ENCODE measurements at regions of chr3 and their contacts with region 1.

Region 1: GRCh38 chr3:12891985-12892839 is 50.8 kb upstream of the RPL32 start:
- DNase-seq: peak; percentile 75
- ATAC-seq: peak; percentile 37
- H3K4me3 ChIP-seq: peak overlapping the region in 1 of 5 experiments; percentile 35
- H3K4me3 Mint-ChIP-seq: peak overlapping the region; percentile 2
- H3K27ac ChIP-seq: no peak overlapping the region
- H3K27ac Mint-ChIP-seq: no peak overlapping the region
- H3K4me1 ChIP-seq: peaks cover 4 to 8% of the 10 kb centered on the region in 2 donors
- H3K4me1 Mint-ChIP-seq: peaks cover 14% of the 10 kb centered on the region
- H3K27me3 ChIP-seq: peaks cover 0 to 14% (median 3%) of the 10 kb centered on the region in 4 experiments
- H3K27me3 Mint-ChIP-seq: peaks cover 9% of the 10 kb centered on the region
- CTCF ChIP-seq: peak; percentile 94

Region 2: DNA sequence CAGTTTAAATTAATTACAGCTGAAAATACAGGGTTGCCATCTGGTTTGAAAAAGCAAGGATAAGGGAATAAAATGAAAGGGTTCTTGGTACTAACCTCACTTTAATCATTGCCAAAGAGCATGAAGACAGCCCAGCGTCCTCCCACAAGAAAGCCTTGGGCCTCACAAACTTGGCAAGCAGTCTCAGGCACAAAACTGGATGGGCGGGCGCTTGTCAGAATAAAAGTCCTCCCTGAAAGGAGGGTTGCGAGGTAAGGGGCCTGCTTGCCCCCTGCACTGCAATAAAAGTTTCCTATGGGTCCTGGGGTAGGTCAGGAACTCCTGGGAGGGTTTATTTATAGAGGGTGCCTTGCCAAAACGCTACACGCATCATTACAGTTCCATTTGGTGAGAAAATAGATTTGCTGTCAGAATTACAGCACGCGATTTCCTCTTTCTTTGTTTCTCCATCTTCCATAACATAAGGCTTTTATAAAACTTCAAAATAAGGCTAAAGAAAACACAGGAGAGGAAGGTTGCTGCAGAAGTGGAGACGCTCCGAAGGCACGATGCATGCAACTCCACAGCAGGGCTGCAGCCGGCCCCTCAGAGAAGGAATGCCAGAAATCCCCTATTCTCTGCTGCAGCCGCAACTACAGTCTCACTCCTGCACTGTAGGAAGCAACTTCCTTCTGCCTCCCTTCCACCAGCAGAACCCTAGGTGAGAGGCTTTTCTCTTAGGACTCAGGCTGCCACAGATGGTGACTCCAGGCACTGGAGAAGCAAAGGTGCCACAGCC is 1309.8 kb before region 1 on chr3:
- CTCF ChIA-PET with region 1: no interaction called
- POLR2A ChIA-PET with region 1: no interaction called
- intact Hi-C with region 1: no loop called
- DNase-seq: no peak
- ATAC-seq: no peak
- H3K4me3 ChIP-seq: no peak overlapping the region
- H3K4me3 Mint-ChIP-seq: peak overlapping the region; percentile 29
- H3K27ac ChIP-seq: no peak overlapping the region
- H3K27ac Mint-ChIP-seq: no peak overlapping the region
- H3K4me1 ChIP-seq: peaks cover 13 to 16% of the 10 kb centered on the region in 2 donors
- H3K4me1 Mint-ChIP-seq: peaks cover 35% of the 10 kb centered on the region
- H3K27me3 ChIP-seq: no peaks in the 10 kb centered on the region
- H3K27me3 Mint-ChIP-seq: no peaks in the 10 kb centered on the region
- CTCF ChIP-seq: no peak

Region 3: DNA sequence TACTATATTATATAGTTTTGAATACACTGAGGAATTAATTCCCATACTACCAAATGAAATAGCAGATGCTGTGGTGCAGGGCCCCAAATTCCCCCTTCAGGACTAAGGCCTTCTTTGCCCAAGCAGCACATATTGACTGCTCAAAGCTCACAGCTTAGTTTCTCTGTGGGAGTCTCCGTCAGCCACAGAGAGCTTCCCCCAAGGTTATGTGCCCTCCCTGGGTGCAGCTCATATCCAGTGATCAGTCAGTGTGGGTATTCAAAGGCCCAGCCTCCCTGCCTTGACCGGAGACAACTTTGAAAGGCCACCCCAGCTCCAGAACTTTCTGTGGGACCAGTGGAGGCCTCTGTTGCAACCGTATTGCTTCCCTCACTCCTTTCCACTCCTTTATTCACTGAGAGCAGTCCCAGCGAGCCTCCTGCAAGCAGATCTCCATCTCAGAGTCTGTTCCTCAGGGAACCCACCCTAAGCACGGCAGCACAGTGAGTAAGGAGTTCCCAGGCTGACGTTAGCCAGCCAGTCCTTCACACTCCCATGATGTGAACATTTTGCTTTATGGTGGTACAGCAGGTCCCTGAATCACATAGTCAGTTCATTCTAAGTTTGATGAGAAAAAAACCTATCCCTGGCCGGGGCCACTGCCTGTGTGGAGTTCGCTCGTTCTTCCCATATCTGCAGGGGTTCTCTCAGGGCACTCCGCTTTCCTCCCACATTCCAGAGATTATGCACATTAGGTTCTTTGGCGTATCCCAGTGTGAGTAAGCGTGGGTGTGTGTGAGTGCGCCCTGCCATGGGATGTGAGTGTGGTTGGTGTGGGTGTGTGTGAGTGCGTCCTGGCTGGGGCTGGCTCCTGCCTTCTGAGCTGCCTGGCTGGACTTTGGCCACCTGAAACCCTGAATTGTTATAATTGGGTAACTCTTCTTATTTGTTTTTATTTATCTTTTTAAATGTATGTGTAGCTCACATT is 667.7 kb before region 1 on chr3:
- CTCF ChIA-PET with region 1: no interaction called
- POLR2A ChIA-PET with region 1: no interaction called
- intact Hi-C with region 1: no loop called
- DNase-seq: no peak
- ATAC-seq: no peak
- H3K4me3 ChIP-seq: no peak overlapping the region
- H3K4me3 Mint-ChIP-seq: no peak overlapping the region
- H3K27ac ChIP-seq: no peak overlapping the region
- H3K27ac Mint-ChIP-seq: no peak overlapping the region
- H3K4me1 ChIP-seq: no peaks in the 10 kb centered on the region
- H3K4me1 Mint-ChIP-seq: no peaks in the 10 kb centered on the region
- H3K27me3 ChIP-seq: no peaks in the 10 kb centered on the region
- H3K27me3 Mint-ChIP-seq: no peaks in the 10 kb centered on the region
- CTCF ChIP-seq: no peak

Region 4: GRCh38 chr3:12706504-12707253 is 185.5 kb before region 1 on chr3:
- CTCF ChIA-PET with region 1: interaction called, 13 read pairs
- POLR2A ChIA-PET with region 1: no interaction called
- intact Hi-C with region 1: loop called (anchors 1 kb)
- DNase-seq: peak; percentile 67
- ATAC-seq: peak; percentile 97
- H3K4me3 ChIP-seq: no peak overlapping the region
- H3K4me3 Mint-ChIP-seq: no peak overlapping the region
- H3K27ac ChIP-seq: no peak overlapping the region
- H3K27ac Mint-ChIP-seq: no peak overlapping the region
- H3K4me1 ChIP-seq: no peaks in the 10 kb centered on the region
- H3K4me1 Mint-ChIP-seq: peaks cover 1% of the 10 kb centered on the region
- H3K27me3 ChIP-seq: peaks cover 0 to 7% (median 0%) of the 10 kb centered on the region in 4 experiments
- H3K27me3 Mint-ChIP-seq: peaks cover 8% of the 10 kb centered on the region
- CTCF ChIP-seq: peak; percentile 77

Region 5: GRCh38 chr3:12868039-12869034 is 23.9 kb before region 1 on chr3:
- CTCF ChIA-PET with region 1: interaction called, 116 read pairs
- POLR2A ChIA-PET with region 1: no interaction called
- intact Hi-C with region 1: loop called (anchors 1 kb)
- DNase-seq: peak; percentile 79
- ATAC-seq: peak; percentile 73
- H3K4me3 ChIP-seq: peak overlapping the region; percentile 19 to 59 (median 47)
- H3K4me3 Mint-ChIP-seq: peak overlapping the region; percentile 85
- H3K27ac ChIP-seq: no peak overlapping the region
- H3K27ac Mint-ChIP-seq: peak overlapping the region; percentile 8
- H3K4me1 ChIP-seq: peaks cover 16 to 34% of the 10 kb centered on the region in 2 donors
- H3K4me1 Mint-ChIP-seq: peaks cover 23% of the 10 kb centered on the region
- H3K27me3 ChIP-seq: peaks cover 0 to 23% (median 3%) of the 10 kb centered on the region in 4 experiments
- H3K27me3 Mint-ChIP-seq: peaks cover 9% of the 10 kb centered on the region
- CTCF ChIP-seq: peak; percentile 92

Region 6: GRCh38 chr3:12875857-12876836 is 16.1 kb before region 1 on chr3:
- CTCF ChIA-PET with region 1: interaction called, 116 read pairs
- POLR2A ChIA-PET with region 1: interaction called, 3 read pairs
- intact Hi-C with region 1: no loop called
- DNase-seq: peak; percentile 55
- ATAC-seq: peak; percentile 81
- H3K4me3 ChIP-seq: peak overlapping the region in 2 of 5 experiments; percentile 12 to 27
- H3K4me3 Mint-ChIP-seq: peak overlapping the region; percentile 39
- H3K27ac ChIP-seq: no peak overlapping the region
- H3K27ac Mint-ChIP-seq: peak overlapping the region; percentile 20
- H3K4me1 ChIP-seq: peaks cover 8 to 14% of the 10 kb centered on the region in 2 donors
- H3K4me1 Mint-ChIP-seq: peaks cover 9% of the 10 kb centered on the region
- H3K27me3 ChIP-seq: peaks cover 0 to 24% (median 4%) of the 10 kb centered on the region in 4 experiments
- H3K27me3 Mint-ChIP-seq: peaks cover 7% of the 10 kb centered on the region
- CTCF ChIP-seq: peak; percentile 9

Region 7: DNA sequence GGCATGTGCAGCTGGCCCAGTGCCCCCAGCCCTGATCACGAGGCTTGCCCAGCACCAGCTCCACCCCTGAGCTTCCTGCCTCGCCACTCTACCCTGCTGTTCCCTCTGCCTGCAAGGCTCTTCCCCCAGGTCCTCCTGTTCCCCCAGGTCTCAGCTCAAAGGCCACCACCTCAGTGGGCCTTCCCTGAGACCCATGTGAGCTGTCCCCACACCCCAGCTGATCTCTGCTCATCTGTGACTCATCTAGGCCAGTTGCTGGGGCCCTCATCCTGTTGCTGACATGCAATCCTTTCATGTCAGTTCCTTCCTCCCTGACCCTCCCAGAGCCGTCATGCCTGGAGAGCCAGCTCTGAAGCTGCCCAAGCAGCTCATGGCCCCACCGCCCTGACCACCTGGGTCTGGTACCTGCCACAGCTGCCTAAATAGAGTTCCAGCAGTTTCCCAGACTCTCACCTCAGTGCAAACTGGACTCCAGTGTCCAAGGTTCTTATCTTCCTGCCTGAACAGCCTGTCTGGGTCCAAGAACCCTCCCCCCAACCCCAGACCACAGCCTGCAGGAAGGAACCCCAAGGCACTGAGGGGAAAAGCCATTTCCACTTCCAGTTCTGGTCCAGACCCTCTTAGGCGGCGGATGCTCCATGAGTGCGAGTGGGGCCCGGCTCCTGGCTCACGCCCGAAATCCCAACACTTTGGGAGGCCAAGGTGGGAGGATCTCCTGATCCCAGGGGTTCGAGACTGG is 297.6 kb after region 1 on chr3:
- CTCF ChIA-PET with region 1: no interaction called
- POLR2A ChIA-PET with region 1: no interaction called
- intact Hi-C with region 1: no loop called
- DNase-seq: no peak
- ATAC-seq: no peak
- H3K4me3 ChIP-seq: no peak overlapping the region
- H3K4me3 Mint-ChIP-seq: no peak overlapping the region
- H3K27ac ChIP-seq: no peak overlapping the region
- H3K27ac Mint-ChIP-seq: no peak overlapping the region
- H3K4me1 ChIP-seq: peaks cover 3 to 9% of the 10 kb centered on the region in 2 donors
- H3K4me1 Mint-ChIP-seq: peaks cover 10% of the 10 kb centered on the region
- H3K27me3 ChIP-seq: peaks cover 0 to 37% (median 7%) of the 10 kb centered on the region in 4 experiments
- H3K27me3 Mint-ChIP-seq: peaks cover 40% of the 10 kb centered on the region
- CTCF ChIP-seq: no peak

Measured in B cell (primary cell).